ENCODE measurements at regions of chr7 and their contacts with region 1.

Region 1: GRCh38 chr7:37366445-37366844 is 82.2 kb downstream of the ELMO1 start:
- DNase-seq: no peak
- ATAC-seq: no peak

Region 2: DNA sequence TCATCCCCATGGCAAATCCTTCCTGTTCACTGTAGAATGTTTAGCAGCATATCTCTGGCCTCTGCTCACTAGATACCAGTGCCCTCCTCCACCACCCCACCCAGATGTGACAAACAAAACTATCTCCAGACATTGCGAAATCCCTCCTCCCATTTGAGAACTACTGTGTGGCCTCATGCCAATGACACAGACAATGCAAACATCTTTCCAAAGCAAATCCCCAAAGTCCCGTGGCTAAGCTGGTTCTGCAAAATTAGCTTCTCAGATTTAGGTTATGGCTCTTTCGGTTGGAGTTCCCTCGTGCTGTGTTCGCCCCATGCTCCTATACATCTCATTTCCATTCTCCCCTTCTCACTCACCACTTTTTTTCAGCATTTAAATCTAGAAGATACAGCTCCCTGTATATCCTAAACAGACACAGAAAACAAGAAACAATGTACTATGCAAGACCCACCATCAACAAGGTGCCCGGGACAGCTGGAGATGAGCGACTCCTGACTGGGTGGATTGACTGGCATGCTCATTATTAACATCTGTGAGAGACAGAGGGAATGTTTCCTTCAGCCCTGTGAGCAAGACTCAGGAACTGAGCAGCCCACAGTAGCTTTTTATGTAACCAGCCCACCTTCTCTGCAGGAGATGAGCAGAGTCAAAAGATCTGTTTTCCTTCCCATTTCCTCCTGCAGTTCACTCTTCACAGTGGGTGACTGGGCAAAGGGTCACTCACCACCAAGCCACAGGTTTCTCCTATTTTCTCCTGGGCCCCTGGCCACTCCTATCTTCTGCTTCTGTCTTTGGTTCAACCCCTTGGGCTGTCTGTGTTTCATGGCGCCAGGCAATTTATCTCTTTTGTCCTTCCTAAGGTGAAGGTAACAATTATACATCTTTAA is 416.5 kb before region 1 on chr7:
- intact Hi-C with region 1: no loop called
- DNase-seq: no peak
- ATAC-seq: peak; percentile 49

Region 3: GRCh38 chr7:37149051-37149772 is 217.2 kb before region 1 on chr7:
- intact Hi-C with region 1: no loop called
- DNase-seq: no peak
- ATAC-seq: no peak

Region 4: DNA sequence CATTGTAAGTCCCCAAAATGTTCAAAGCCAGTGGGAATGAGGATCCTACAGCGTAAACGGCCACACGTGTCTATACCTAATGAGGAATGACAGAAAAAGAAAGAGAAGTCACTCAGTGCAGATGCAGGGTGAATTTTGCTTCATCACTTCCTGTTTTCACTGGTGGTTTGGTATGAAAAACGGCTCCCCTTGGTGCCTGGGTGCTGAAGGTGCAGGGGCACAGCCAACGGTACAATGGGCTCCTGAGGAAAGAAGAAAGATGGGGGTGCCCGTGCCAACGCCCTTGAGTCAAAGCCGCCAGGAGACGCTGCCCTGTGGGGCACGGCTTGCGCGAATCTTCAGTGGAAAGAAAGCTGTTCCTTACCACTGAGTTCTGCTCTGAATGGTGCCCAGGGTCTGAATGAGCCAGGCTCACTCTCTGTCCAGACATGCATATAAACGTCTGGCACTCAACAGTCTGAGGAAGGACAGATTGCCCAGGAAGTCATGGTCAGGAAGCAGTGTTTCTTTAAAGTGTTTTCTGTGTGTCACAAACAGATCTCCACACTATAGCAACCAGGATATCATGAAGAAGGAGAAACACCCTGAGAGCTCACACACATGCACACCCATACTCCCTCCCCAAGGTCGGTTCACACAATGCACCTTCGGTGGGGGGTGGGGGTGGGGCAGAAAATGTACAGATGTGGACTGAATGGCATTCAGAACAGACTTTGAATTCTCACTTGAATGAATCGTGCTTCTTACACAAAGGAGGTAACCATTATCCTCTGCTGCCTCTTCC is 23.6 kb before region 1 on chr7:
- intact Hi-C with region 1: loop called (anchors 2 kb)
- DNase-seq: peak; percentile 79
- ATAC-seq: peak; percentile 60

Region 5: DNA sequence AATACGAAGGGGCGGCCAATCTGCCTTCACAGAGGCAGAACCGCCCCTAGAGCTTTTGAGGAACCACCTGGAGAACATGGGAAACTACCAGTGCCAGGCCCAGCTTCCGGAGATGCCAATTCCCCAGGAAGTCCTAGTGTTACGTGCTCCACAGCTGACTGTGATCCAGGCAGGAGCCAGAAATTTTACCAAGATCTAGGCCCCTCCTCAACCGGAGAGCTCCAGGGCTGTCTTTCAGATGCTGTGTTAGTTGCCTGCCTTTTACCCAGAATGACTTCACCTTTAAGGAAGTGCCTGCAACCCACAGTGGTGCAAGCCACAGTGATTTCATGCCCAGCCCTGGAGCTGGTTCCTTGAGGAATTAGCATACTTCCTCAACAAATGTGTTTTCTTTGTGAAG is 19.3 kb after region 1 on chr7:
- intact Hi-C with region 1: no loop called
- DNase-seq: no peak
- ATAC-seq: peak; percentile 43